Psoas muscle (tissue), 8 donors: ENCODE measurements at regions of chr6 and their contacts with region 1.

Region 1: GRCh38 chr6:150320442-150320841 is 48.4 kb upstream of the IYD start:
- DNase-seq: peak; percentile 78 to 90
- ATAC-seq: peak; percentile 89 to 94 (median 92)
- H3K4me3 ChIP-seq: no peak overlapping the region
- H3K27ac ChIP-seq: peak overlapping the region; percentile 87
- H3K4me1 ChIP-seq: peaks cover 60% of the 10 kb centered on the region
- H3K27me3 ChIP-seq: no peaks in the 10 kb centered on the region
- CTCF ChIP-seq: no peak

Region 2: DNA sequence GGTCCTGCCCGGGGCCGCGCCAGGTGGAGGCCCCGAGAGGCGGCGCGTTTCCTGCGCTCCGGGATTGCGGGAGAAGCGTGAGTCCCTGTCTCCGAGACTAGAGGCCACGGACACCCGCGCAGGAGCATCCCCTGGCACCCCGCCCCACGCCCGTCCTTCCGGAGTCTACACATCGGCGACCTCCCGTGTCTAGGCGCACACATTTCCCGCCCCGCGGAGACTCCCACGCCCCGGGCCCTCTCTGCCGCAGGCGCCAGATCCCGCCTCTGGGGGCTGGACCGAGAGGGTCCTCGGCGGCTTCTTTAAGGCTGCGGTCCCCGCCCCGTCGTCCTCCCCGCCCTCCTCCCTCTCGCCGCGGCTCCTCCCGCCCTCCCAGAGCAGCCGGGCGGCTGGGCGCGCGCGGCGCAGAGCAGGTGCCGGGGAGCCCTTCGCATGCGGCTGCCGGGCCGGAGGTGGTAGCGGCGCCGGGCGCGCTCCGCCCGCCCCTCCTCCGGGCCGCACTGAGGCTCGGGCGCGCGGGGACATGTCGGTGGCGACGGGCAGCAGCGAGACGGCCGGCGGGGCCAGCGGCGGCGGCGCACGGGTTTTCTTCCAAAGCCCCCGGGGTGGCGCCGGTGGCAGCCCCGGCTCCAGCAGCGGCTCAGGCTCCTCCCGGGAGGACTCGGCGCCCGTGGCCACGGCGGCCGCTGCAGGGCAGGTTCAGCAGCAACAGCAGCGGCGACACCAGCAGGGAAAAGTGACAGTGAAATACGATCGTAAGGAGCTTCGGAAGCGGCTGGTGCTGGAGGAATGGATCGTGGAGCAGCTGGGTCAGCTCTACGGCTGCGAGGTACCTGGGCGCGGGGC is 177.5 kb before region 1 on chr6 and contains the start of gene PPP1R14C:
- intact Hi-C with region 1: loop called (anchors 5 kb)
- DNase-seq: peak; percentile 43 to 75
- ATAC-seq: peak; percentile 79 to 84 (median 80)
- H3K4me3 ChIP-seq: peak within 1 kb of the TSS; percentile 81
- H3K27ac ChIP-seq: peak within 1 kb of the TSS; percentile 88
- H3K4me1 ChIP-seq: peaks cover 11% of the 10 kb centered on the region
- H3K27me3 ChIP-seq: peaks cover 0 to 5% (median 0%) of the 10 kb centered on the region in 3 donors
- CTCF ChIP-seq: no peak
- total RNA-seq, gene PPP1R14C: 13.3 to 62.8 (median 22.4) TPM

Region 3: GRCh38 chr6:150195996-150196417 is 124.4 kb before region 1 on chr6:
- intact Hi-C with region 1: loop called in 1 of 2 experiments (anchors 5 kb)
- DNase-seq: no peak
- ATAC-seq: peak; percentile 92 to 96 (median 94)
- H3K4me3 ChIP-seq: no peak overlapping the region
- H3K27ac ChIP-seq: peak overlapping the region; percentile 82
- H3K4me1 ChIP-seq: peaks cover 33% of the 10 kb centered on the region
- H3K27me3 ChIP-seq: no peaks in the 10 kb centered on the region
- CTCF ChIP-seq: no peak

Region 4: DNA sequence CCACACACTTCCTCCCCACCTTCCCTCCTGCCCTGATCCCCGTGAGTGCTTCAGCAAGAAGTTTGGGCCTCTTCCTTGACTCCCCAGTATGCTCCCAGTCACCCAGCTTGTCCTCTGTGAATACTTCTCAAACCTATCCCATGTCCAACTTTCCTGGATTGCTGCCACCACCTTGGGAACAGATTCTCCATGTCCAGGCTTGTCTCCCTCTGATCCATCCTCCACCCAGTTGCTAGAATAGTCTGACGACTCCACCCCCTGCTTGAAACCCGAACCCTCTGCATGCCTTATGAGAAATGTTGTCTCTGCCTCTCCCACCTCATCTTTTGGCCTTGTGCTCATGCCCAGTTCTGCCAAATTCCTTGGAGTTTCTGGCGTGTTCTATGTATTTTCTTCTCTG is 69.6 kb before region 1 on chr6:
- intact Hi-C with region 1: loop called (anchors 5 kb)
- DNase-seq: peak in 1 of 2 donors; percentile 27
- ATAC-seq: peak; percentile 48 to 79 (median 74)
- H3K4me3 ChIP-seq: no peak overlapping the region
- H3K27ac ChIP-seq: peak overlapping the region; percentile 85
- H3K4me1 ChIP-seq: peaks cover 63% of the 10 kb centered on the region
- H3K27me3 ChIP-seq: no peaks in the 10 kb centered on the region
- CTCF ChIP-seq: no peak

Region 5: DNA sequence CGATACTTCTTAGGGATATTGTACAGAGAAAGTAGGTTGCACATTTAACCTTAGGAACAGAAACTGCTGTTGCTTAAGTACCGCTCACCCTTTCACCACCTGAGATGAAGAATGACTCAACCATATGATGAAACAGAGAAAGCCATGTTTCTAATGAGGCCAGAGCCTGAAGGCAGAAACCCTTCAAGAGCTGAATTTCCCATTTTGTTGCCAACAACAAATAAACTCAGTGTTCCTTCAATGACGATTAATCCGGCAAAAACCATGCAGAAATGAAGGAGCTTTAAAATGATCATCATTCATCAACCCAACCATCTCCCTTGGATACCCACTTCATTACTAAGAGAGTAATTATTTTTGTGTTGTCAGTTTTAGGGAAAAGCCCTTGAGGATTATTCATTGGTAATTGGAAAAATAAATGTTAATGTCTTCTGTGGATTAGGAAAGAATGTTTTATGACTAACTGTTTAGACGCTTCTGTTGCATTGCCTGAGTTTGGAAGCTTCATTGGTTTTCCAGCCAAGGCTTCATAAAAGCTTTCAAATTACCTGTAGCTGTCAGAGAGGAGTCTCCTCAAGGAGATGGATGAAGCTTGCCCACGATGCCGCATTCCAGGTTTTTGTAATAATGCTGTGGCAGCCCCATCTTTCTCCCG is 63.7 kb before region 1 on chr6:
- intact Hi-C with region 1: loop called (anchors 5 kb)
- DNase-seq: no peak
- ATAC-seq: peak; percentile 33 to 63 (median 40)
- H3K4me3 ChIP-seq: no peak overlapping the region
- H3K27ac ChIP-seq: peak overlapping the region; percentile 85
- H3K4me1 ChIP-seq: peaks cover 52% of the 10 kb centered on the region
- H3K27me3 ChIP-seq: no peaks in the 10 kb centered on the region
- CTCF ChIP-seq: no peak